Ovary (tissue), 10 donors: ENCODE measurements at regions of chr1 and their contacts with region 1.

Region 1: GRCh38 chr1:54273092-54273794 is 73.3 kb downstream of the MRPL37 start:
- DNase-seq: peak; percentile 84 to 91 (median 87)
- H3K4me3 ChIP-seq: peak overlapping the region; percentile 3
- H3K27ac ChIP-seq: peak overlapping the region; percentile 79 to 94
- H3K4me1 ChIP-seq: peaks cover 62% of the 10 kb centered on the region
- H3K27me3 ChIP-seq: no peaks in the 10 kb centered on the region
- CTCF ChIP-seq: peak; percentile 62 to 86 (median 83)
- EP300 ChIP-seq: peak; percentile 86
- POLR2A ChIP-seq: no peak

Region 2: DNA sequence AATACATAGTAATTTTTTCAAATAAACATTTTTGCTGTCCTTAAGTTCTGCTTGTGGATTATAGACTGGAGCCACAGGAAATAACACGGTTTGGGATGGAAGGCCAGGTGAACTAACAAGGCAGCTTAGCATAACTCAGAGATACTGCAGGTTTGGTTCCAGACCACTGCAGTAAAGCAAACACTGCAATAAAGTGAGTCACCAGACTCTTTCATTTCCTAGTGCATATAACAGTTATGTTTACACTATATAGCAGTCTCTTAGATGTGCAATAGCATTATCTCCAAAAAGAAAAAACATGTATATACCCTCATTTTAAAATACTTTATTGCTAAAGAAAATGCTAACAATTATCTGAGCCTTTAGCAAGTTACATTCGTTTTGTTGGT is 305.1 kb before region 1 on chr1:
- intact Hi-C with region 1: no loop called
- DNase-seq: no peak
- H3K4me3 ChIP-seq: no peak overlapping the region
- H3K27ac ChIP-seq: no peak overlapping the region
- H3K4me1 ChIP-seq: peaks cover 2% of the 10 kb centered on the region
- H3K27me3 ChIP-seq: no peaks in the 10 kb centered on the region
- CTCF ChIP-seq: no peak
- EP300 ChIP-seq: no peak
- POLR2A ChIP-seq: no peak

Region 3: GRCh38 chr1:54121482-54122134 is 151.6 kb before region 1 on chr1:
- intact Hi-C with region 1: loop called in 1 of 4 experiments (anchors 5 kb)
- DNase-seq: peak; percentile 85 to 91 (median 89)
- H3K4me3 ChIP-seq: no peak overlapping the region
- H3K27ac ChIP-seq: no peak overlapping the region
- H3K4me1 ChIP-seq: peaks cover 4% of the 10 kb centered on the region
- H3K27me3 ChIP-seq: no peaks in the 10 kb centered on the region
- CTCF ChIP-seq: peak; percentile 76 to 83 (median 80)
- EP300 ChIP-seq: no peak
- POLR2A ChIP-seq: no peak

Region 4: GRCh38 chr1:54153548-54154439 is 119.4 kb before region 1 on chr1:
- intact Hi-C with region 1: no loop called
- DNase-seq: peak in 4 of 5 donors; percentile 33 to 74 (median 53)
- H3K4me3 ChIP-seq: no peak overlapping the region
- H3K27ac ChIP-seq: no peak overlapping the region
- H3K4me1 ChIP-seq: no peaks in the 10 kb centered on the region
- H3K27me3 ChIP-seq: no peaks in the 10 kb centered on the region
- CTCF ChIP-seq: no peak
- EP300 ChIP-seq: no peak
- POLR2A ChIP-seq: no peak

Region 5: DNA sequence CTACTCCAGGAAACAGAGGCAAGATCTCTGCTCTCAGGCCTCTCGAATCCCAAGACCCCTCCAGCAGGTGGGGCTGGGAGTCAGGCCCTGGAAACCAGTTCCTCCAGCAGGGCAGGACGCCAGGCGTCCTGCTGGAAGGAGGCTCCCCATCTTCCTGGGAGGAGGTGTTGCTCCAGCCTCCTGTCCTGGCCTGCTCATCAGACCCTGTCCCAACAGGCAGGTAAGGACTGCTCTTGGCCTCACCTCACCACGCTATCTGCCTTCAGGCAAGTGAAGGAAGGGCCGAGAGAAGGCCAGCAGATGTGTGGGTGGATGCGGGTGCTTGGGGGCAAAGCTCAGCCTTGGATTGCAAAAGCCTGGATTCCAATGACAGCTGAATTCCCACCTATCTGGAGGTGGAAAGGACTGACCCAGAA is 50.1 kb after region 1 on chr1:
- intact Hi-C with region 1: loop called in 1 of 4 experiments (anchors 10 kb)
- DNase-seq: peak; percentile 57 to 70 (median 61)
- H3K4me3 ChIP-seq: no peak overlapping the region
- H3K27ac ChIP-seq: peak overlapping the region; percentile 36 to 43
- H3K4me1 ChIP-seq: peaks cover 52% of the 10 kb centered on the region
- H3K27me3 ChIP-seq: no peaks in the 10 kb centered on the region
- CTCF ChIP-seq: peak in 1 of 3 donors; percentile 5
- EP300 ChIP-seq: no peak
- POLR2A ChIP-seq: no peak

Region 6: GRCh38 chr1:54406339-54407153 is 133.3 kb after region 1 on chr1 and contains the start of gene SSBP3:
- intact Hi-C with region 1: loop called (anchors 2 to 5 kb)
- DNase-seq: peak; percentile 92 to 96 (median 93)
- H3K4me3 ChIP-seq: peak within 1 kb of the TSS; percentile 98
- H3K27ac ChIP-seq: peak within 1 kb of the TSS; percentile 74 to 93
- H3K4me1 ChIP-seq: peaks cover 18% of the 10 kb centered on the region
- H3K27me3 ChIP-seq: no peaks in the 10 kb centered on the region
- CTCF ChIP-seq: peak in 2 of 3 donors; percentile 32 to 37
- EP300 ChIP-seq: no peak
- POLR2A ChIP-seq: peak; percentile 79
- total RNA-seq, gene SSBP3: 41.2 to 247 (median 143) TPM

Region 7: DNA sequence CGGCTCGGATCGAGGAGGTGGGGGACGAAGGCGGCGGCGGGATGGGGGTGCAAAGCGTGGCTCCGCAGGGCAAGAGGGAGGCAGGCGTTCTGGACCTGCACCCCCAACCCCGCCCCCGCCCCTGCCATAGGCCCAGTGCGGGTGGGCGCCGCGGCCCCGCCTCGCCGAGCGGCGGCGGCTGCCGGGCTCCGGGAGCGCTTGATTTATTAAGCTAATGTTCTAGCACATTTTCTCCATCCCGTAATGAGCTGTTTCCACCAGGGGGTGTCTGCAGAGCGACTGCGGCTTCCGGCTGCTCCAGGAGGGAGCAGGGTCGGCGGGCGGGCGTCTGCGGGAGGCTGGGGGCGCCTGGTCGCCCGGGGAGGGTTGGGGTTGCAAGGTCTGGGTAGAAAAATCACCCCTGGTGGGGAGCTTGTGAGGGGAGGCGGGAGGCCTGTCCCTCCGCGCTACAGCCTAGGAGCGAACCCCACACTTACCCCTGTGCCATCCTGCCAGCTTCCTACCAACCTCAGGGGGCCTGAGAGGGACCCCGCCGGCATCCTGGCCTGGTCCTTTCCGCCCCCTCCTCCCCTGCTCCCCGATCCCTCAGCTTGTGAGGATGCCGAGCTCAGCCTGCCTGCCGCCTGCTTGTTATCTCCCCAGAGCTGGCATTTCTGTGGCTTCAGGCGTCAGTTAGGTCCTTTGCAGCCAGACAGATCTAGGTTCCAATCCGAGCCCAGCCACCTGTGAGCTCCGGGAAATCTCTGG is 226.3 kb after region 1 on chr1:
- intact Hi-C with region 1: loop called in 1 of 4 experiments (anchors 5 kb)
- DNase-seq: peak; percentile 50 to 70 (median 57)
- H3K4me3 ChIP-seq: peak overlapping the region; percentile 36
- H3K27ac ChIP-seq: no peak overlapping the region
- H3K4me1 ChIP-seq: no peaks in the 10 kb centered on the region
- H3K27me3 ChIP-seq: no peaks in the 10 kb centered on the region
- CTCF ChIP-seq: peak in 2 of 3 donors; percentile 15 to 17
- EP300 ChIP-seq: no peak
- POLR2A ChIP-seq: no peak